GM10248 (cell line): ENCODE measurements at regions of chr4 and their contacts with region 1.

Region 1: DNA sequence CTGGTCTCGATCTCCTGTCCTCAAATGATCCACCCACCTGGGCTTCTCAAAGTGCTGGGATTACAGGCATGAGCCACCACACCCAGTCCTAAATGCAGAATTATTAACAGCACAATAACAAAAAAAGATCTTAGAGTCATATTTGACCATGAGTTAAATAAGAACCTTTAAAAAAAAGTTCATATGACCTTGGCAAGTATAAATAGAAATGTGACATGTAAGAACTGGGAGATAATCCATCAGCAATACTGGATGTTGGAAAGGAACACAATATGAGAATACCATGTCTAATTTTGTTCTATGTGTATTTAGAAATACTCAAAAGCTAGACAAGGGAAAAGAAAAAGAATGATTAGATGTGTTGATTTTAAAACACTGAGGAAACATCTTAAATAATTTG is 231.6 kb downstream of the RAPGEF2 start:
- DNase-seq: no peak
- CTCF ChIP-seq: no peak

Region 2: GRCh38 chr4:159344877-159345276 is 10.4 kb after region 1 on chr4:
- CTCF ChIA-PET with region 1: interaction called, 10 read pairs
- POLR2A ChIA-PET with region 1: no interaction called
- DNase-seq: no peak
- CTCF ChIP-seq: no peak

Region 3: GRCh38 chr4:159384632-159385031 is 50.2 kb after region 1 on chr4:
- CTCF ChIA-PET with region 1: no interaction called
- POLR2A ChIA-PET with region 1: no interaction called
- DNase-seq: no peak
- CTCF ChIP-seq: no peak